HEK293T (cell line): ENCODE measurements at regions of chr9 and their contacts with region 1.

Region 1: GRCh38 chr9:112112941-112113681 is 62.0 kb downstream of the SUSD1 start:
- DNase-seq: peak; percentile 32

Region 2: GRCh38 chr9:112020680-112021596 is 92.2 kb before region 1 on chr9:
- CTCF ChIA-PET with region 1: no interaction called
- POLR2A ChIA-PET with region 1: no interaction called
- DNase-seq: no peak

Region 3: GRCh38 chr9:112361601-112362000 is 248.5 kb after region 1 on chr9:
- CTCF ChIA-PET with region 1: interaction called, 10 read pairs
- POLR2A ChIA-PET with region 1: no interaction called
- DNase-seq: peak; percentile 18